Right ventricle myocardium inferior (tissue), 1 donor: ENCODE measurements at regions of chr15 and their contacts with region 1.

Region 1: DNA sequence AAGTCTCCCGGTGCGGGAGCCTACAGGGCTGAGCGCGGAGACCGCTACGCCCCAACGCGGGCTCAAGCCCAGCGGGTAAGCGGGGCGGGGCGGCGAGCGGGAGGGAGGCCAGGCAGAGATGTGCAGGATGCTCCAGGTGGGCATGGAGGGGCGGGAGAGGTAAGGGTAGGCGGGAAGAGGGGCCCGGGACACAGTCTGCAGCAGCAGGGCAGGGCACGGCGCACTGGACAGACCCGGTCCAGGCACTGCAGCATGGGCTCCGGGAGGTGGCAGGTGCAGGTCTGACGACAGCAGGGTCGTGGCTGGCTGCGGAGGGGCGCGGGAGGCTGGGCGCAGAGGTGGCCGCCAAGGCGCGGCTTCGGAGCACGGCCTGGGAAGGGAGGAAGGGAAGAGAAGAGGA is 102.8 kb downstream of the GABRB3 start:
- DNase-seq: no peak
- ATAC-seq: no peak

Region 2: DNA sequence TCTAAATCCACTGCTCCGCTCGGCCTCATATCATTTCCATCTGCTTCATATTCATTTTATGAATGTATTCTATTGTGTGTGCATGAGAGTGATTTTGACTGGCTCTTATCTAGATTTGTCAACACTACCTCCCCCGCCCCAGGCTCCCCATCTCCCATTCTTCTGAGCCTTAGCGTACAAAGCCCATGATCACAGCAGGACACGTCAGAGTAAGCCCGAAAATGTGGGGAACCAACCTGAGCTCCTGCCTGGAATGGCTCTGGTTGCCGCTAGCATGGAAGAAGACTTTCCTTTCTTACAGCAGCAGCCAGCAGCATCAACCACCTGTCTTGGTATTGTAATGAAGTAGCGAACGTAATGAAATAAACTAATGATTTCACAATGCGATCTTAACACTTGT is 41.3 kb after region 1 on chr15:
- intact Hi-C with region 1: no loop called
- DNase-seq: no peak
- ATAC-seq: no peak

Region 3: DNA sequence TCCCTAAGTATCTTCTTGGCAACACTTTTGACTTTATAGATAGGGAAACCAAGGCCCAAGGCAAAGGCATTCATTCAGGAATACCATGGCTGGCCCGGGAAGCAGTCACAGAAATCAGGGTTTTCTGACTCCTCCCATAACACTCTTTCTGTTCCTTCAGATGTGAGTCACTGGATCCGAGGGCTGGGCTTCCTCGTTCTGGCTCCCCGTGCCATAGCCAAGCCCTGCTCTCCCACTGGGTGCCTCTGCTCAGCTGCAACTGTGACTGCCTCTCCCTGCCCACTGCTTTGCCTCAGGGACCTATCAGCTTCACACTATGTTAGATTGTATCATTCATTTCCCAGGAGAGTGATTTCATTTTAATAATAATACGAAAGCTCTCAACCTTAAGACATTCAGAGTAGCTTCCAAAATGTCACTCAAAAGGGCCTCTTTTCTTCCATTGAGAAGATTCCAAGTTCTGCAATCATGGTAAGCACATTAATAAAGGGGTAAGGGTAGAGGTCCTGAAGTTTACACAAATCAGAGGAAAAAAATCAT is 52.6 kb after region 1 on chr15:
- intact Hi-C with region 1: loop called (anchors 10 kb)
- DNase-seq: no peak
- ATAC-seq: no peak